ENCODE measurements at regions of chrX and their contacts with region 1.

Region 1: DNA sequence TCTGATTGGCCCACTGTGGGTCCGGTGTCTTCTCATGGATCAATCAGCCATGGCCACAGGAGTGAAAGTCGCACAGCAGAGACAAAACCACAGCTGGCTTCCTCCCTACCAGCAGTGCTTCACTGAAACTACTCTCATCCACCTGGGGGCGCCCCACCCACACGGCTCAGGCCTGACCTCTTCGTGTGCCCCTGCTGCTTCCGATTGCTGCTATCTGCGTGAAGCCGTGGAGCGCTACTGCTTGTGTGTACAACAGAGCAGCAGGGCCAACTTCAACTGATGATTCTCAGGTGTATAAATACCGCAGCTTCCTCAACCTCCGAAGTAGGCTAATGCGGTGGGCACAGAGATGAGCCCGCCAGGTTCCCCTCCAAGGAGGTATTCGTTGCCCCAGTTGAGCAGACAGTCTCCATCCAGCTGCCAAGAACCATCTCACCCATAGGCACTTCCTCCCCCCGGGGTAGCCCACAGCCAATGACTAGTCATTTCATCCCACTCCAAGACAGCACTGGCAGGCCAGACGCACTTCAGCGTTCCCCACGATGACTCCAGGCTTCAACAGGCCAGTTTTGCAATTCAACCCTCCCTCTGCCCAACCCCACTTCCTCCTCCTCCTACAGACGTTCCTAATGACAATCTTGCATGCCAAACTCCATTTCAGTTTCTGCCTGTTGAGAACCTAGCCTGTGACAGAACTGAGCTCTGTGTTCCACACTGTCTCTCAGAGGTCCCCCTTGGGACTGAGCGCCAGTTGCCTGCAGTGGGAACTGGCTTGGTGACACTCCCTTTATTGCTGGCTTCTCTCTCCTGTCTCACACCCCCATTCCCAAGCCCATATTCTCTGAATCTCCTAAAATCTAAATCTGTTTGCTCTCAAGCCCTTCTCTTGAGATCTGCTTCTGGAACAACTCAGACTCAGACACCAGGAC is 41.3 kb upstream of the ATP6AP2 start:
- DNase-seq: peak in 1 of 2 donors; percentile 72
- H3K4me3 ChIP-seq: no peak overlapping the region
- H3K27ac ChIP-seq: no peak overlapping the region
- H3K4me1 ChIP-seq: no peaks in the 10 kb centered on the region
- H3K27me3 ChIP-seq: no peaks in the 10 kb centered on the region
- CTCF ChIP-seq: no peak

Region 2: DNA sequence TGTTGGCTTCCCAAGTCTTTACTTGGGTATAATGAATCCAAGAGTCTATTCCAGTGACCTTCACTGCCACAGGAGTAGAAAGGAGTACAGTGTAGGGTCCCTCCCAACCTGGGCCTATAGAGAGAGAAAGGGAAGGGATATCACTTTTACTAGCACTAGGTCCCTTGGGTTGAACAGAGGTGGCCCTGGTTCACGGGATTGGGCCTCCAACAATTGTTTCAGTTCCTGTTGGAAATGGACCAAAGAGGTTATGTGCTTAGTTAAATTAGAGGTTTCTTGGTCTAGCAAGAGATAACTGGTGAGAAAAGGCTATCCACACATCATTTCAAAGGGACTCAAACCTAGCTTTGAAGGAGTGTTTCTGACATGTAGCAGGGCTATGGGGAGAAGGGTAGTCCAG is 253.0 kb after region 1 on chrX:
- intact Hi-C with region 1: loop called (anchors 5 kb)
- DNase-seq: no peak
- H3K4me3 ChIP-seq: no peak overlapping the region
- H3K27ac ChIP-seq: no peak overlapping the region
- H3K4me1 ChIP-seq: no peaks in the 10 kb centered on the region
- H3K27me3 ChIP-seq: no peaks in the 10 kb centered on the region
- CTCF ChIP-seq: no peak

Region 3: GRCh38 chrX:40912576-40912975 is 373.1 kb after region 1 on chrX:
- intact Hi-C with region 1: no loop called
- DNase-seq: no peak
- H3K4me3 ChIP-seq: no peak overlapping the region
- H3K27ac ChIP-seq: no peak overlapping the region
- H3K4me1 ChIP-seq: no peaks in the 10 kb centered on the region
- H3K27me3 ChIP-seq: no peaks in the 10 kb centered on the region
- CTCF ChIP-seq: no peak

Region 4: GRCh38 chrX:41116948-41117347 is 577.5 kb after region 1 on chrX:
- intact Hi-C with region 1: loop called (anchors 10 kb)
- DNase-seq: no peak
- H3K4me3 ChIP-seq: no peak overlapping the region
- H3K27ac ChIP-seq: no peak overlapping the region
- H3K4me1 ChIP-seq: peaks cover 0 to 12% of the 10 kb centered on the region in 2 donors
- H3K27me3 ChIP-seq: no peaks in the 10 kb centered on the region
- CTCF ChIP-seq: no peak